Adrenal gland (tissue), 19 donors: ENCODE measurements at regions of chr3 and their contacts with region 1.

Region 1: DNA sequence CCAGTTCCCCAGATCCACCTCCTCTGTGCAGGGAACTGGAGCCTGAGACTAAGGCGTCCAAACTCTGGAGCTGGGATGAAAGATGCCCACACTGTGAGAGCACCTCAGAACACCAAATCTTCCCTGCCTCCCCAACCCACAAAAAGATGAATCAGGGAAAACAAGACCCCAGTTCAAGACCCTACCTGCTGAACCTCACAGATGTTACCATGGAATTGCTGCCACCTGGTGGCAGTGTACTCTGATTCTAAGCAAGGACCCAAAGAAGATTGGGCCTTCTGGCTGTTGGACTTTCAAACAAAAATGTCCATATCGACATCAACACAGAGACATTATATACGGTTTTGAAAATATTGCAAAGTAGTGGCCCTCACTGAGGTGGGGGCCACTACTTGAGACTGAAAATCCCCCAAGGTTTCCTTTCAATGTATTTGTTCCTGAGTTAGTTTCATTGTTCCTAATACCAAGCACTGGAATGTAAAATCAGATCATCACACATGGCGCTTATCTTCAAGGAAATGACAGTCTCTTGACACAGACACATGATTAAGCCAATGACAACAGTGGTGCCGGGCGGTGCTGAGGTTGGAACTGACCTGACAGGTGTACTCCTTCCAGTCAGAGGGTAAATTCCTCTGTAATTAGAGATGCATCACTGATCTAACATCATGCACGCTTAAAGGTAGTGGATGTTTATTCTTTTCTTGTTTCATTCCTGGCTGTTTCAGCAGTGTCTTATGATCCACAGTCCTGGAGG is 67.6 kb downstream of the SLC6A11 start:
- DNase-seq: peak in 1 of 7 donors; percentile 18
- H3K4me3 ChIP-seq: no peak overlapping the region
- H3K27ac ChIP-seq: no peak overlapping the region
- H3K4me1 ChIP-seq: no peaks in the 10 kb centered on the region
- H3K27me3 ChIP-seq: no peaks in the 10 kb centered on the region
- CTCF ChIP-seq: peak in 4 of 6 experiments; percentile 19 to 38 (median 28)
- POLR2A ChIP-seq: no peak

Region 2: GRCh38 chr3:10758304-10759061 is 125.2 kb before region 1 on chr3:
- intact Hi-C with region 1: loop called in 1 of 2 experiments (anchors 10 kb)
- DNase-seq: peak; percentile 48 to 76 (median 61)
- H3K4me3 ChIP-seq: no peak overlapping the region
- H3K27ac ChIP-seq: no peak overlapping the region
- H3K4me1 ChIP-seq: no peaks in the 10 kb centered on the region
- H3K27me3 ChIP-seq: peaks cover 5% of the 10 kb centered on the region
- CTCF ChIP-seq: peak; percentile 51 to 85 (median 72)
- POLR2A ChIP-seq: no peak

Region 3: DNA sequence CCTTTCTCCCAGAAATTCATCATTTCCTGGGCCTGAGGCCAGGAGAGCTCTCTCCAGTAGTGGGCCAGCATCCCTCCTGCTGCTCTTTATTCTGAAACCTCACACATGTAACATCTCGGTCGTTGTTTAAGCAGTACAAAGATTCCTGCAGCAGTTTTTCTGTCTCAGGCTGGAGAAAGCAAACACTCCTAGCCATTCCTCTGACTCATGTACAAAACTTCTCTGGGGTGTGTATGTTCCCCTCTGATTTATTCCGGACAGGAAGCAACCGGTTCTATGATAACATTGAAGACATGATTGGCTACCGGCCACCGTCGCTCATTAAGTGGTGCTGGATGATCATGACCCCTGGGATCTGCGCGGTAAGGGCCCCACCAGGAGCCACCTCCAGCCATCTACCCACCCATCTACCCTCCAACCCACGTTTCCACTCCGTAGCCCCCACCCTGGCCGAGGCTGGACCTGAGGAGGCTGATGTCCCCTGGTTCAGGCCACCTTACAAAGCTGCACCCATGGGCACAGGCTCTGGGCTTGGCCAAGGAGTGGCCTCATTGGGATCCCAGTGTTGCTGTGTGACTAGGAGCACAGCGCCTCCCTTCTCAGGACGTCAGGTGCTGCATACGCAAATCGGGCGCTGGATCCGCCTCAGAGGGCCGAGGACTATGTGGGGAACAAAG is 50.3 kb after region 1 on chr3:
- intact Hi-C with region 1: no loop called
- DNase-seq: no peak
- H3K4me3 ChIP-seq: no peak overlapping the region
- H3K27ac ChIP-seq: peak overlapping the region in 1 of 5 donors; percentile 55
- H3K4me1 ChIP-seq: no peaks in the 10 kb centered on the region
- H3K27me3 ChIP-seq: no peaks in the 10 kb centered on the region
- CTCF ChIP-seq: no peak
- POLR2A ChIP-seq: no peak